ENCODE measurements at regions of chr2 and their contacts with region 1.

Region 1: DNA sequence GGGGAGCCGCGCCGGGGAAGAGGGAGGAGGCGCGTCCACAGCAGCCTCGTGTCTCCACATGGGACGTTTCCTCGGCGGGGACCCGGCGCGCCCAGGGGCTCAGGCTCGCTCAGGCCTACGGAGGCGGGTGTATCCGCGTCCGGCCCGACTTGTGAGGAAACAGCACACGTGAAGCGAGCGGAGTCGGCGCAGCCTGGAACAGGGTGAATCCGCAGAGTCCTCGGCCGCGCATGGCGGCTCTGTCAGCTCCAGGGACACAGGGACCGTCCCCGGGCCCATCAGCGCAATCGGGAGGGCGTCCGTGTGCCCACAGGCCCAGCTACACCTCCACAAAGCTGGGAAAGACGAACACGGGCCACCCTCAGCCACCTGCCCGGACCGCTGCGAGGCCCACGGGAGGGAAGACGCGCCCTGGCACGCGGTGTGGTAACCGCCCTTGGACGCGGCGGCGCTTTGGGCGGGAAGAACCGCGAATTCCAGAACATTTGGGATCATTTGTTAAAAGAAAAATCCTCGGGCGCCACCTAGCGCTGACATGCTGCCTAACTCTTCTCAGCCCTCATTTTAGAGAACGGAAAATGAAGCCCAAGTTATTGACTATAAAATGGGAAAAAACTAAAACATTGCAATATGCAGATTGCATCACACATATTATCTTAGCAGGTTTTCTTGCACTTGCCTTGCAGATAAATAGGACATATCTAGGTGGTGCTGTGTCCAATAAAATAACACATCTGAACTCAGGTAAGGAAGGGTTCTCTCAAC is 40.4 kb downstream of the TMEM18 start:
- DNase-seq: peak; percentile 68
- H3K4me3 Mint-ChIP-seq: peak overlapping the region; percentile 30
- H3K27ac Mint-ChIP-seq: no peak overlapping the region
- H3K4me1 Mint-ChIP-seq: peaks cover 34% of the 10 kb centered on the region
- H3K27me3 Mint-ChIP-seq: no peaks in the 10 kb centered on the region
- CTCF ChIP-seq: peak; percentile 61

Region 2: GRCh38 chr2:246489-247144 is 390.2 kb before region 1 on chr2:
- CTCF ChIA-PET with region 1: no interaction called
- intact Hi-C with region 1: loop called (anchors 1 kb)
- DNase-seq: peak; percentile 55
- H3K4me3 Mint-ChIP-seq: no peak overlapping the region
- H3K27ac Mint-ChIP-seq: no peak overlapping the region
- H3K4me1 Mint-ChIP-seq: peaks cover 8% of the 10 kb centered on the region
- H3K27me3 Mint-ChIP-seq: no peaks in the 10 kb centered on the region
- CTCF ChIP-seq: peak; percentile 74

Region 3: DNA sequence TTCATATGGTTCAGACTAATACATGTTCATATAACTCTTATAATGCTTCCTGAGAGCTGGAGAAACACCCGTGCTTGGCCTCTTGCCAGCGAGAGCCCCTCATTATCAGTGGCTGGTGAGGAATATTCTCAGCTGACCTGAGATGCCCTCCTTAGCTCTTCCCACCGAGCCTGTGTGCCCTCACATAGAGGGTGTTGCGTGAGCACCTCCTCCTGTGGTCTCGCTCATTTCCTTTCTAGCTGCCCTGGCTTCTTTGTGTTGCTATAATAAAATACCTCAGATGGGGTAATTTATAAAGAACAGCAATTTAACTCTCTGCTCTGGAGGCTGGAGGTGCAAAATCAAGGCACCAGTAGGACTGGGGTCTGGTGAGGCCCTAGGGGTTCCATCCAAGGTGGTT is 268.4 kb before region 1 on chr2:
- CTCF ChIA-PET with region 1: no interaction called
- intact Hi-C with region 1: no loop called
- DNase-seq: no peak
- H3K4me3 Mint-ChIP-seq: no peak overlapping the region
- H3K27ac Mint-ChIP-seq: no peak overlapping the region
- H3K4me1 Mint-ChIP-seq: no peaks in the 10 kb centered on the region
- H3K27me3 Mint-ChIP-seq: no peaks in the 10 kb centered on the region
- CTCF ChIP-seq: no peak

Region 4: DNA sequence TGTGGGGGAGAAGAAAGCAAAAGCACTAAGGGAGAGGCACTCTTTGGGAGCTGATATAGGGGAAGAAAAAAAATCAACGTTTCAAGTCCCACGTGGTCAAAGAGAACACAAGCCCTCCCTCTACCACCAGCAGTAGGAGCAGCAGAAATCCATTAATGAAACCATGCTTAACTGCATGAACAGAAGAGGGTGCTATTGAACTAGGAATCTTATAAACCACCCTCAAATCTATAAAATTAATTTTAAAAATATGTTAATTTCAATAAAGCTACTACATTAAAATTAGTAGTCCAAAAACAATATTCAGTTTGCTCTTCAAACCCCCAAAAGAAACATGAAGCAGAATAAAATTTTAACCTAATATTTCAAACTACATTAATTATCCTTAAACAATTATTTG is 107.4 kb before region 1 on chr2:
- CTCF ChIA-PET with region 1: interaction called, 5 read pairs
- intact Hi-C with region 1: loop called (anchors 1 kb)
- DNase-seq: peak; percentile 34
- H3K4me3 Mint-ChIP-seq: no peak overlapping the region
- H3K27ac Mint-ChIP-seq: peak overlapping the region; percentile 4
- H3K4me1 Mint-ChIP-seq: no peaks in the 10 kb centered on the region
- H3K27me3 Mint-ChIP-seq: no peaks in the 10 kb centered on the region
- CTCF ChIP-seq: peak; percentile 54

Region 5: DNA sequence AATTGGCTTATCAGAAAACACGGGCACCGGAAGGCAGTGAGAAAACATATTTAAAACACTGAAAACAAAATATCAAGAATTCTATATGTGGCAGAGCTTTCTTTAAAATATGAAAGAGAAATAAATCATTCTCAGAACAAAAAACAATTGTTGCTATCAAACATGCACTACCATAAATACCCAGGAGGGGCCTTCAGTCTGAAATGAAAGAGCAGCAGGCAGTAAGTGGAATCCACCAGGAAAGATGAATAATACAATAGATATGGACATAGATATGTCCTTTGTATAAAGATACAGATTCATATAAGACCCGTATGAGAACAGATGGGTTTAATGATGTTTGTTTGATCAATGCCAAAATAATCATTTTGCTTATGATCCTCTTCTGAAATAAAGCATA is 101.6 kb before region 1 on chr2:
- CTCF ChIA-PET with region 1: no interaction called
- intact Hi-C with region 1: loop called (anchors 1 kb)
- DNase-seq: peak; percentile 22
- H3K4me3 Mint-ChIP-seq: no peak overlapping the region
- H3K27ac Mint-ChIP-seq: no peak overlapping the region
- H3K4me1 Mint-ChIP-seq: no peaks in the 10 kb centered on the region
- H3K27me3 Mint-ChIP-seq: no peaks in the 10 kb centered on the region
- CTCF ChIP-seq: peak; percentile 27

Region 6: GRCh38 chr2:586641-587076 is 50.2 kb before region 1 on chr2:
- CTCF ChIA-PET with region 1: interaction called, 4 read pairs
- intact Hi-C with region 1: loop called (anchors 1 kb)
- DNase-seq: peak; percentile 50
- H3K4me3 Mint-ChIP-seq: peak overlapping the region; percentile 34
- H3K27ac Mint-ChIP-seq: peak overlapping the region; percentile 64
- H3K4me1 Mint-ChIP-seq: peaks cover 13% of the 10 kb centered on the region
- H3K27me3 Mint-ChIP-seq: no peaks in the 10 kb centered on the region
- CTCF ChIP-seq: no peak

Region 7: GRCh38 chr2:667332-667999 is 30.6 kb after region 1 on chr2:
- CTCF ChIA-PET with region 1: no interaction called
- intact Hi-C with region 1: no loop called
- DNase-seq: peak; percentile 35
- H3K4me3 Mint-ChIP-seq: no peak overlapping the region
- H3K27ac Mint-ChIP-seq: no peak overlapping the region
- H3K4me1 Mint-ChIP-seq: no peaks in the 10 kb centered on the region
- H3K27me3 Mint-ChIP-seq: no peaks in the 10 kb centered on the region
- CTCF ChIP-seq: peak; percentile 58

Region 8: GRCh38 chr2:726204-726603 is 89.4 kb after region 1 on chr2:
- CTCF ChIA-PET with region 1: no interaction called
- intact Hi-C with region 1: no loop called
- DNase-seq: no peak
- H3K4me3 Mint-ChIP-seq: no peak overlapping the region
- H3K27ac Mint-ChIP-seq: no peak overlapping the region
- H3K4me1 Mint-ChIP-seq: peaks cover 14% of the 10 kb centered on the region
- H3K27me3 Mint-ChIP-seq: no peaks in the 10 kb centered on the region
- CTCF ChIP-seq: no peak

Region 9: GRCh38 chr2:881204-881918 is 244.5 kb after region 1 on chr2:
- CTCF ChIA-PET with region 1: no interaction called
- intact Hi-C with region 1: no loop called
- DNase-seq: no peak
- H3K4me3 Mint-ChIP-seq: no peak overlapping the region
- H3K27ac Mint-ChIP-seq: no peak overlapping the region
- H3K4me1 Mint-ChIP-seq: no peaks in the 10 kb centered on the region
- H3K27me3 Mint-ChIP-seq: no peaks in the 10 kb centered on the region
- CTCF ChIP-seq: no peak

Measured in Calu3 (cell line).